Activated T-helper 1 cell treated with anti-CD3 and anti-CD28 coated beads, Interleukin-12 subunit alpha, Interleukin-12 subunit beta, Interleukin-2, Interleukin-4 antibody, amounts not matched to agents 30 ng/mL and 10 ng/mL and 1 ng/mL, durations not matched to agents 14 hours and 24 hours and 36 hours (primary cell): ENCODE measurements at regions of chr7 and their contacts with region 1.

Region 1: DNA sequence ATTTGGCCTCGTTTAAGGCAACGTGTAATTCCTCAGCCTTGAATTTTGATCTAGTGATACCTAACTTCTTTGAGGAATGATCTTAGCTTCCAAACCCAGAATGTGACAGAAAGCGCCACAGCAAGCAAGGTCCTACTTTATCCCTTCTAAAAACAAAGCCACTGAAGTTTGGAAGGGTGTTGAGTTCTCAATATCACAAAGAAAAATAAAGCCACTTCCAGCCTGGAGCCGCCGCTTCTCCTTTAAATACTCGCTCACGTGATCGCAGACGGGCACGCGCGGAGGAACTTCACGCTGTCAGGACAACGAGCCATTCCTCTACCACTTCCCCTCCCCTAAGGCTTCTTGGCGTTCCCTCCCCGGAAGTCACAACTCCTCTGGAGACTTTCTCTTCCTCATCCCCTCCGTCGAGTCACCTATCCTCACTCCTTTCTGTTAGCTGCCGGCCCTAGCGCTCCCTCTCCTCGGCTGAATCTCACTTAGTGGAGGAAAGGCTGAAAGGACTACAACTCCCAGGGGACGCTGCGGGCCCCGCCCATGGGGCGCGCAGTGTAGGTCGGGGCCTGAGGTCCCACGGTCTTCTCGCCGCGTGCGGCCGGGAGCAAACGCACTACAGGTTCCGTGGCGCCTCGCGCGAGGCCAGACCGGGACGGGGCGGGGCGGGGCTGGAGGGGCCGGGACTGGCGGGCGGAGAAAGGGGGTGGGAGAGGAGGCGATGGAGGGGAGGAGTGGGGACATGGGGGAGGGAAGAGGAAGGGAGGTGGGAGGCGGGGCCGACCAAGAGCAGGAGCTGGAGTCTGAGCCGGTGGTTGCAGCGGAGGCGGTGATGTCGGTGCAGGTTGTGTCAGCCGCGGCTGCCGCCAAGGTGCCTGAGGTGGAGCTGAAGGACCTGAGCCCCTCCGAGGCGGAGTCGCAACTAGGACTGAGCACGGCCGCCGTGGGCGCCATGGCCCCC is at the start of gene AHCYL2:
- DNase-seq: peak; percentile 92
- H3K4me3 Mint-ChIP-seq: peak within 1 kb of the TSS; percentile 90
- H3K27ac Mint-ChIP-seq: peak within 1 kb of the TSS; percentile 87
- H3K4me1 Mint-ChIP-seq: peaks cover 31% of the 10 kb centered on the region
- H3K27me3 Mint-ChIP-seq: peaks cover 6% of the 10 kb centered on the region
- total RNA-seq, gene AHCYL2: 14.1 and 15.5 TPM in 2 replicates

Region 2: DNA sequence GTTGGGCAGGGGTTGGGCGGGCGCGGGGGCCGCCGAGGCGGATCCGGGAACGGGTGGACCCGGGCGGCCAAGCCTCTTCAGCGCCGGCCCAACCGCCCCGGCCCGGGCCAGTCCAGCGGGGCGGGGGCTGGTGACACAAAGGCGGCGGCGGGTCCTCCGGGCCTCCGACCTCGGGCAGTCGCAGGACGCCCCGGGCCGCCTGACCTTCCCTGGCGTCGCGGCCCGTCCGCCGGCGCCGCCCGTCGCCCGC is 693.7 kb before region 1 on chr7:
- intact Hi-C with region 1: loop called (anchors 5 kb)
- DNase-seq: no peak
- H3K4me3 Mint-ChIP-seq: no peak overlapping the region
- H3K27ac Mint-ChIP-seq: no peak overlapping the region
- H3K4me1 Mint-ChIP-seq: peaks cover 40% of the 10 kb centered on the region
- H3K27me3 Mint-ChIP-seq: no peaks in the 10 kb centered on the region

Region 3: GRCh38 chr7:128963327-128963757 is 261.2 kb before region 1 on chr7:
- intact Hi-C with region 1: loop called (anchors 1 kb)
- DNase-seq: peak; percentile 34
- H3K4me3 Mint-ChIP-seq: peak overlapping the region; percentile 57
- H3K27ac Mint-ChIP-seq: peak overlapping the region; percentile 72
- H3K4me1 Mint-ChIP-seq: peaks cover 43% of the 10 kb centered on the region
- H3K27me3 Mint-ChIP-seq: no peaks in the 10 kb centered on the region

Region 4: DNA sequence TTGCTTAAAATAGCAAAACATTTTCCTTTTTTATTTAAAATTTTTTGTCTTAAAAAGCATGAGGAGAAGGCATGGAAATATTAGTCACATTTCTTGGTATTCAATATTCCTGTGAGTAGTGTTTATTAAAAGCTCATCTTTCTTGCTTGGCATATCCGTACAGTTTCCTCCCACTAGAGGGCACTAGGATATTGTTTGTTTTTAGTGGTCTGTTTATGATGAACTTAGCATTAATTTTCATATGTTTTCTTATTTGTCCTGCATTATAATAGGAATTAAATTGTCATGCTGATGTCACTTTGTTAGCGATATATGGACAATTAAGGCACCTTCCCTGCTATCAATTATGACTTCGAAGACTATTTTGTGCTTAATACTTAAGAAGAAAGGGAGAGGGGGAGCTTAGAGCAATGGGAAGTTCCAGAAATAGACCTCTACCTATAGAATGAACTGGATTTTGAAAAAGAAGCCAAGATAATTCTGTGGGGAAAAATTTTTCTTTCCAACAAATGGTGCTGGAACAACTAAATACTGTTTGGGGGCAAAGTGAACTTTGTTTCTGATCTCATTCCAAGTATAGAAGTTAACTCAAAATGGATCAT is 118.7 kb after region 1 on chr7:
- intact Hi-C with region 1: loop called (anchors 1 kb)
- DNase-seq: no peak
- H3K4me3 Mint-ChIP-seq: no peak overlapping the region
- H3K27ac Mint-ChIP-seq: no peak overlapping the region
- H3K4me1 Mint-ChIP-seq: peaks cover 42% of the 10 kb centered on the region
- H3K27me3 Mint-ChIP-seq: no peaks in the 10 kb centered on the region

Region 5: GRCh38 chr7:129468087-129468486 is 243.6 kb after region 1 on chr7:
- intact Hi-C with region 1: loop called (anchors 2 kb)
- DNase-seq: no peak
- H3K4me3 Mint-ChIP-seq: no peak overlapping the region
- H3K27ac Mint-ChIP-seq: no peak overlapping the region
- H3K4me1 Mint-ChIP-seq: peaks cover 31% of the 10 kb centered on the region
- H3K27me3 Mint-ChIP-seq: no peaks in the 10 kb centered on the region

Region 6: DNA sequence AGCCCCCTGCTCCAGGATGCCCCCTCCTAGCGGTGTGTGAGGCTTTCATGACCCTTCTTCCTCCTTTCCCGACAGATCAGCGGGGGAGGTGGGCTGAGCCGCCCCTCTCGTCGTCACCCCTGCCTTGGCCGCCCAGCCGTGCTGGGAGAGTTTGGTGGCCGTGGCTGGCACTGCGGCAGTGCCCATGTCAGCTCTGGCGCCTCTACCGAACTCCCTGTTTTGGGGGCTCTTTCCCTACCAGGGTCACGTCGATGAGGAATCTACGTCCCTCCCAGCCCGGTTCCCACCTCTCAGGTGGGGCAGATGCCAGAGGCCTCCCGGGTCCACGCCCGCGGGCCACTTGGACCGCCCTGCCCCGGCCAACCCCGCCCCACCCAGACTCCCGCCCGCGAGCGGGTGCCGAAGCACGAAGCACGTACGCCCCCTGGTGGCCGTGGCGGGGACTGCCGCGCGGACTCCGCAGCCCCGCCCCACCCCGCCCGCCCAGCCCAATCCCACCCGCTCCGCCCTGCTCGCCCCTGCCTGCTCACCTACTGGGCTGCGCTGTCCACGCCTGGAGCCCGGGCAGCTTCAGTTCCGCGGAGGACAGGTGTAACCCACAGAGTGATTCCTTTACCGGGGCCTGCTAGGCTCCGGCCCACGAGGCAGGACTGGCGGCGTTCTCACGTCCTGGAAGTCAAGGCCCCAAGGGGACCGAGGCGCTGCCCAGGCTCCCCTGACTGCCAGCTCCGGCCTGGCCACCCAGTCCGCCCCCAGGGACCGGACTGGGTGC is 601.2 kb after region 1 on chr7:
- intact Hi-C with region 1: loop called (anchors 2 kb)
- DNase-seq: peak; percentile 83
- H3K4me3 Mint-ChIP-seq: peak overlapping the region; percentile 89
- H3K27ac Mint-ChIP-seq: peak overlapping the region; percentile 67
- H3K4me1 Mint-ChIP-seq: peaks cover 14% of the 10 kb centered on the region
- H3K27me3 Mint-ChIP-seq: no peaks in the 10 kb centered on the region

Region 7: DNA sequence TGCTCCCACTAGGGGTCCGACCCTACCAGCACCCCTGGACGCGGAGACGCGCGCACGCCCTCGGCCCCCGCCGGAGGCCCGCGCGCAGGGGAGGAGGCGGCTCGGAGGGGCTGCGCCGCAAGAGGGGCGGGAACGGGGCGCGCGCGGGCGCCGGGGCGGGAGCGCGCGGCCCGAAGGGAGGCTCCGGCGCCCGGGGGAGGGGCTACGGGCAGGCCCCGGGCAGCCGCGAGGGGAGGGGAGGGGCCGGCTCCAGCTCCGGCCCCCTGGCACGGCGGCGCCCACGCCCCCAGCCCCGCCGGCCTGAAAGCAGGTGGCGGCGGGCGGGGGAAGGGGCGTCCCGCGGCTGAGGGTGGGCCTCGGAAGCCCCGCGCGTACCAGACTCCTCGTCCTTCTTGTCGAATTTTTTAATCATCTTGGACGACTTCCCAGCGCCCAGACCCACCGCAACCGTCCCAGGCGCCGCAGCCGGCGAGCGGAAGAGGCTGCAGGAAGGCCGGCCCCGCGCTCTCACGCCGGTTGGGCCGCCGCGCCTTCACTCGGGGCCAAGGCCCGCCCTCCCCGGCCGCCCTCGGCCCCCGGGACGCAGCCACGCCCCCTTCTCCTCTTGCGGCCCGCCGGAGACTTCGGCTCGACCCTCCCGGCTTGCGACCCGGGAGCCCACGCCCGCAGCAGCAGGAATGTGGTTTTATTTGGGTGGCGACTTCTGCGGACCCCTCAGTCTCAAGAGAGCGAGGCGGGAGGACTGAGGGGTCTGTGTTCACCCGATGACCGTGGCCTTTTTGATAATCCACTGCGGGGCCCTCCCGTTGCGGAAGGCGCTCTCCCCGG is 1443.9 kb after region 1 on chr7 and contains the start of gene COPG2:
- intact Hi-C with region 1: loop called (anchors 2 kb)
- DNase-seq: peak; percentile 76
- H3K4me3 Mint-ChIP-seq: peak within 1 kb of the TSS; percentile 88
- H3K27ac Mint-ChIP-seq: peak within 1 kb of the TSS; percentile 41
- H3K4me1 Mint-ChIP-seq: peaks cover 22% of the 10 kb centered on the region
- H3K27me3 Mint-ChIP-seq: no peaks in the 10 kb centered on the region
- total RNA-seq, gene COPG2: 19.3 and 20.9 TPM in 2 replicates